ENCODE measurements at regions of chr5 and their contacts with region 1.

Region 1: DNA sequence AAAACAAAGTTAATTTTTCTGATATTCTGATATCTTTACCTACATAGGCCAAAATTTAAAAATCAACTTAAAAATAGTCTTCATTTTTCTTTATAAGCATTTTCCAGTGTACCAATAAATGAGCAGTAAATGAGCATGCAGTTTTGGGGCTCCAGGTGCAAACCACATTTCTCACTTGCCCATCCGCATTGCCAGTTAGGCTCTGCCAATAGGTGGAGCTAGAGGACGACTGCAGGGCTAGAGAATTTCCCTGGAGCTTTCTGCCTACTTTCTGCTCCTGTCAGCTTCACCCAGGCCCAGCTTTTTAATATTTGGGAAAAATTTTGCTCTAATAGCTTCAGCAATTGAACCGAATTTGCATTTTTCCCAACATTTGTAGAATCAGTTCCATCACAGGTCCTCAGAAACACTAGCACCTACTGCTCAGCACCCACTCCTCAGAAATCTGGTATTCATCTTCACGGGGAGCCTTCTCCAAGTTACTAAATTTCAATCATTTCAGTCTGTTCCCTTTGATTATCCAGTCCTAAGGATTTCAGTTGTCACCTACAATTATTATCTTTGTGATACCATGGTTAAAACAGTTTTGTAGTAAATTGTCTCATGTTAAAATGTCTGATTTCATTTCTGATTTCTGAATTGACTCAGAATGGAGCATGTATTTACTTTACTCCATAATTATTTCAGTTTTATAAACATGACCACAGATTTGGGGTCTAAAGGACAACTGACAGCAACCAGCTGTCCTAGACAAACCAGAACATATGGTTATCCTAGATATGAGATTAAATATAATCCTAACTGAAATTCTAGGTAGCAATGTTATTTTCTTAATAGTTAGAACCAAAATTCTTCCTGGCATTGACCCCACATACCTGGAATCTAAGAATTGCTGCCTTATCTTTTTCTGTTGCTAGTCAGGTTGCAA is 104.6 kb upstream of the FAM174A start:
- DNase-seq: peak; percentile 30
- ATAC-seq: peak; percentile 68; the same call in 1 of the 2 replicates
- H3K4me3 ChIP-seq: no peak overlapping the region
- H3K27ac ChIP-seq: no peak overlapping the region
- H3K4me1 ChIP-seq: no peaks in the 10 kb centered on the region
- H3K27me3 ChIP-seq: no peaks in the 10 kb centered on the region
- CTCF ChIP-seq: peak; percentile 84
- POLR2A ChIP-seq: no peak
- RAD21 ChIP-seq: peak; percentile 77

Region 2: GRCh38 chr5:100322483-100322882 is 108.0 kb before region 1 on chr5:
- CTCF ChIA-PET with region 1: no interaction called
- POLR2A ChIA-PET with region 1: no interaction called
- dilution Hi-C with region 1: no loop called
- in situ Hi-C with region 1: no loop called
- intact Hi-C with region 1: no loop called
- DNase-seq: no peak
- ATAC-seq: no peak
- H3K4me3 ChIP-seq: no peak overlapping the region
- H3K27ac ChIP-seq: no peak overlapping the region
- H3K4me1 ChIP-seq: no peaks in the 10 kb centered on the region
- H3K27me3 ChIP-seq: no peaks in the 10 kb centered on the region
- CTCF ChIP-seq: no peak
- POLR2A ChIP-seq: no peak
- RAD21 ChIP-seq: no peak

Region 3: GRCh38 chr5:100479079-100479688 is 48.7 kb after region 1 on chr5:
- CTCF ChIA-PET with region 1: no interaction called
- POLR2A ChIA-PET with region 1: no interaction called
- dilution Hi-C with region 1: no loop called
- in situ Hi-C with region 1: no loop called
- intact Hi-C with region 1: no loop called
- DNase-seq: peak; percentile 7
- ATAC-seq: no peak
- H3K4me3 ChIP-seq: no peak overlapping the region
- H3K27ac ChIP-seq: no peak overlapping the region
- H3K4me1 ChIP-seq: no peaks in the 10 kb centered on the region
- H3K27me3 ChIP-seq: no peaks in the 10 kb centered on the region
- CTCF ChIP-seq: peak; percentile 42
- POLR2A ChIP-seq: no peak
- RAD21 ChIP-seq: peak; percentile 54

Region 4: DNA sequence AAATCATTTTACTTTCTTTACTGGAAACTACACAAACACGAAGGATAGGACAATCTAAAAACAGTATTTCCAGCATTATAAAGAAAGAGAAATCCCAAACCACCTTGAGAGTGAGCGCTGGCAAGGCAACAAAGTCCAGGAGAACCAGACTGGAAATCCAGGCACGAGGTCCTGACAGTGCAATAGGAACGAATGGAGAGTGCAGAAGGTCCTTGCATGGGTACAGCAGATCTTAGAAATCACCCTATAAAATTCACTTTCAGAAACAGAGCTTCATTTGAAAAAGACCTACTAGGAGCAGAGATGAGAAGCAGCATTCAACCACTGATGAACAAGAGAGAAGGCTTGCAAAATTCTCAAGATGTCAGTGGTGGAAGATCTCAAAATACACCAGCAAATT is 606.2 kb after region 1 on chr5:
- CTCF ChIA-PET with region 1: no interaction called
- POLR2A ChIA-PET with region 1: no interaction called
- dilution Hi-C with region 1: no loop called
- in situ Hi-C with region 1: no loop called
- intact Hi-C with region 1: no loop called
- DNase-seq: no peak
- ATAC-seq: no peak
- H3K4me3 ChIP-seq: no peak overlapping the region
- H3K27ac ChIP-seq: no peak overlapping the region
- H3K4me1 ChIP-seq: no peaks in the 10 kb centered on the region
- H3K27me3 ChIP-seq: no peaks in the 10 kb centered on the region
- CTCF ChIP-seq: no peak
- POLR2A ChIP-seq: no peak
- RAD21 ChIP-seq: no peak

Region 5: GRCh38 chr5:101390151-101390908 is 959.8 kb after region 1 on chr5:
- CTCF ChIA-PET with region 1: interaction called, 3 read pairs
- POLR2A ChIA-PET with region 1: no interaction called
- dilution Hi-C with region 1: no loop called
- in situ Hi-C with region 1: loop called (anchors 25 kb)
- intact Hi-C with region 1: loop called (anchors 1 kb)
- DNase-seq: peak; percentile 45
- ATAC-seq: peak; percentile 24; the same call in 1 of the 2 replicates
- H3K4me3 ChIP-seq: no peak overlapping the region
- H3K27ac ChIP-seq: no peak overlapping the region
- H3K4me1 ChIP-seq: no peaks in the 10 kb centered on the region
- H3K27me3 ChIP-seq: no peaks in the 10 kb centered on the region
- CTCF ChIP-seq: peak; percentile 55
- POLR2A ChIP-seq: no peak
- RAD21 ChIP-seq: peak; percentile 64

Region 6: GRCh38 chr5:101678481-101679193 is 1248.1 kb after region 1 on chr5:
- CTCF ChIA-PET with region 1: no interaction called
- POLR2A ChIA-PET with region 1: no interaction called
- dilution Hi-C with region 1: no loop called
- in situ Hi-C with region 1: no loop called
- intact Hi-C with region 1: loop called (anchors 1 kb)
- DNase-seq: peak; percentile 47
- ATAC-seq: peak; percentile 92
- H3K4me3 ChIP-seq: no peak overlapping the region
- H3K27ac ChIP-seq: no peak overlapping the region
- H3K4me1 ChIP-seq: no peaks in the 10 kb centered on the region
- H3K27me3 ChIP-seq: no peaks in the 10 kb centered on the region
- CTCF ChIP-seq: peak; percentile 86
- POLR2A ChIP-seq: no peak
- RAD21 ChIP-seq: peak; percentile 78

Region 7: DNA sequence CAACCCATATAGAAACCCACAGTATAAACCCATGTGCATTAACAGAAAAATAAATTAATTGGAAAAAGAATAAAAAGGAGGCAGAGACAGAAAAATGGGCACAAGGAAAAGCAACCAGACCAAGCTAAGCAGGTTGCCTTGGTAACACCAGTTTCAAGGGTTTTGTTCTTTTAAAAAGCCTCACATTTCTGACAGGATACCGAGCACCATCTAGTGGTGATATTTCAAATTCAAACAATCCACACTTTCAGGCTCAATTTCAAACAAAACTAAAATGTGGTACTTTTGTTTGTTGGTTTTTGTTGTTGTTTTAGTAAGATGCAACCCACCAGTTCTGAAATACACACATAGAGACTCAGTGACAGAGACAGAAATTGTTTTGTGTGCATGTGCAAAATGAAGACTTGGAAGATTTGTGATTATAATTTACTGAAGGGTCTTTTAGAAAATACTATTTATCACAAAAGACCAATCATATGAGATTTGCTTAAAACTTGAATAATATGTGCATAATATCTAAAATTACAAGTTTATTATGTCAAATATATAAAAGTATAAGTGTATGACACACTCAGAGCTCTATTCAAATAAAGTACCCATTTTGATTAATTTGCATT is 1547.3 kb after region 1 on chr5:
- CTCF ChIA-PET with region 1: no interaction called
- POLR2A ChIA-PET with region 1: no interaction called
- dilution Hi-C with region 1: no loop called
- in situ Hi-C with region 1: no loop called
- intact Hi-C with region 1: loop called (anchors 5 kb)
- DNase-seq: peak; percentile 13
- ATAC-seq: no peak
- H3K4me3 ChIP-seq: no peak overlapping the region
- H3K27ac ChIP-seq: no peak overlapping the region
- H3K4me1 ChIP-seq: no peaks in the 10 kb centered on the region
- H3K27me3 ChIP-seq: no peaks in the 10 kb centered on the region
- CTCF ChIP-seq: peak; percentile 46
- POLR2A ChIP-seq: no peak
- RAD21 ChIP-seq: no peak; the same call in 1 of the 2 replicates